ENCODE measurements at regions of chr5 and their contacts with region 1.

Region 1: GRCh38 chr5:129541644-129542251 is 81.7 kb downstream of the ADAMTS19 start:
- DNase-seq: no peak
- ATAC-seq: no peak
- H3K4me3 ChIP-seq: no peak overlapping the region
- H3K27ac ChIP-seq: no peak overlapping the region
- H3K4me1 ChIP-seq: no peaks in the 10 kb centered on the region
- H3K27me3 ChIP-seq: no peaks in the 10 kb centered on the region
- CTCF ChIP-seq: peak in 2 of 12 donors; percentile 10 to 18
- POLR2A ChIP-seq: no peak

Region 2: GRCh38 chr5:129499208-129499852 is 42.4 kb before region 1 on chr5:
- intact Hi-C with region 1: loop called in 1 of 10 experiments (anchors 2 kb)
- DNase-seq: no peak
- ATAC-seq: no peak
- H3K4me3 ChIP-seq: no peak overlapping the region
- H3K27ac ChIP-seq: no peak overlapping the region
- H3K4me1 ChIP-seq: no peaks in the 10 kb centered on the region
- H3K27me3 ChIP-seq: no peaks in the 10 kb centered on the region
- CTCF ChIP-seq: no peak
- POLR2A ChIP-seq: no peak